ENCODE measurements at regions of chr19 and their contacts with region 1.

Region 1: DNA sequence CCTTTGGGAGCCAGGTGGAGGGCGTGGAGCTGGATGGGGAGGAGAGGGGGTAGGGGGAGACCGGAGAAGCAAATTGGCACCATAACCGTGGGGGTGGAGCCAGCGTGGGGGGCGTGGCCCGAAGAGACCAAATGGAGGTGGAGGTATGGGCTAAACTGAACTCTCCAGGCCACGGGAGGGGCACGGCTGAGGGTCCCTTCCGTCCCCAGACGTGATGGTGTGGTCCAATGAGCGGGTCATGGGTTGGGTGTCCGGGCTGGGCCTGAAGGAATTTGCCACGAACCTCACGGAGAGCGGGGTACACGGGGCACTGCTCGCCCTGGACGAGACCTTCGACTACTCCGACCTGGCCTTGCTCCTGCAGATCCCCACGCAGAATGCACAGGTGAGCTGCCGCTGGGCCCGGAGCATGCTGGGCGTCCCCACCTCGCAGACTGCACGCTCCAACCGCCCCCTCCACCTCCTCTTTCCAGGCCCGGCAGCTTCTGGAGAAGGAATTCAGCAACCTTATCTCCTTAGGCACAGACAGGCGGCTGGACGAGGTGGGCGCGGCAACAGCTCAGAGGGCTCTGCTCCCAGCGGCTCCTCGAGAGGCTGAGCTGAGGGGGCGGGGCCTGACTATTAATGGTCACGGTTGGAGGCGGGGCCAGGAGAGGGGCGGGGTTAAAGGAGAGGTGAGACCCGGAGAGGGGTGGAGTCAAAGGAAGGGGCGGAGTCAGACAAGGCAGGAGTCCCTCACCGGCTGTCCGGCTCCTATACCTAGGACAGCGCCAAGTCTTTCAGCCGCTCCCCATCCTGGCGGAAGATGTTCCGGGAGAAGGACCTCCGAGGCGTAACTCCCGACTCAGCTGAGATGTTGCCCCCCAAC is 6.2 kb downstream of the HRC start:
- DNase-seq: peak; percentile 95 to 100
- H3K4me3 ChIP-seq: peak overlapping the region; percentile 88
- H3K27ac ChIP-seq: 0 out of 2 replicates have a peak overlapping the region, but pooled peaks have one; percentile 37
- H3K4me1 ChIP-seq: peaks cover 16% of the 10 kb centered on the region; the same call in 1 of the 2 replicates
- H3K27me3 ChIP-seq: no peaks in the 10 kb centered on the region
- CTCF ChIP-seq: no peak

Region 2: GRCh38 chr19:48784540-48784939 is 364.5 kb before region 1 on chr19:
- CTCF ChIA-PET with region 1: no interaction called
- POLR2A ChIA-PET with region 1: no interaction called
- intact Hi-C with region 1: no loop called
- DNase-seq: peak in 1 of 2 experiments; percentile 44
- H3K4me3 ChIP-seq: no peak overlapping the region
- H3K27ac ChIP-seq: no peak overlapping the region
- H3K4me1 ChIP-seq: peaks cover 11% of the 10 kb centered on the region
- H3K27me3 ChIP-seq: no peaks in the 10 kb centered on the region
- CTCF ChIP-seq: peak; percentile 47

Region 3: GRCh38 chr19:49073514-49074378 is 75.3 kb before region 1 on chr19:
- CTCF ChIA-PET with region 1: no interaction called
- POLR2A ChIA-PET with region 1: interaction called, 15 read pairs
- intact Hi-C with region 1: no loop called
- DNase-seq: peak in 1 of 2 experiments; percentile 56
- H3K4me3 ChIP-seq: no peak overlapping the region
- H3K27ac ChIP-seq: no peak overlapping the region
- H3K4me1 ChIP-seq: peaks cover 10% of the 10 kb centered on the region; the same call in 1 of the 2 replicates
- H3K27me3 ChIP-seq: peaks cover 29% of the 10 kb centered on the region
- CTCF ChIP-seq: peak; percentile 23; the same call in 1 of the 2 replicates

Region 4: GRCh38 chr19:49110567-49110966 is 38.5 kb before region 1 on chr19:
- CTCF ChIA-PET with region 1: no interaction called
- POLR2A ChIA-PET with region 1: interaction called, 12 read pairs
- intact Hi-C with region 1: no loop called
- DNase-seq: no peak
- H3K4me3 ChIP-seq: no peak overlapping the region
- H3K27ac ChIP-seq: no peak overlapping the region
- H3K4me1 ChIP-seq: peaks cover 10% of the 10 kb centered on the region
- H3K27me3 ChIP-seq: no peaks in the 10 kb centered on the region
- CTCF ChIP-seq: no peak

Region 5: GRCh38 chr19:50203281-50204080 is 1054.5 kb after region 1 on chr19 and contains the start of gene MYH14:
- CTCF ChIA-PET with region 1: no interaction called
- POLR2A ChIA-PET with region 1: interaction called, 11 read pairs
- intact Hi-C with region 1: no loop called
- DNase-seq: peak; percentile 92 to 98
- H3K4me3 ChIP-seq: peak within 1 kb of the TSS; percentile 82
- H3K27ac ChIP-seq: peak within 1 kb of the TSS; percentile 97
- H3K4me1 ChIP-seq: peaks cover 33% of the 10 kb centered on the region
- H3K27me3 ChIP-seq: no peaks in the 10 kb centered on the region
- CTCF ChIP-seq: no peak
- total RNA-seq, gene MYH14: 115 and 169 TPM in 2 replicates

Measured in PC-9 (cell line).